ENCODE measurements at regions of chr9 and their contacts with region 1.

Region 1: GRCh38 chr9:34403554-34404380 is 27.1 kb upstream of the MYORG start:
- DNase-seq: peak; percentile 69
- ATAC-seq: peak; percentile 45
- H3K4me3 Mint-ChIP-seq: no peak overlapping the region
- H3K27ac Mint-ChIP-seq: no peak overlapping the region
- H3K4me1 Mint-ChIP-seq: no peaks in the 10 kb centered on the region
- H3K27me3 Mint-ChIP-seq: no peaks in the 10 kb centered on the region
- CTCF ChIP-seq: peak; percentile 100

Region 2: GRCh38 chr9:34376596-34377403 is 27.0 kb before region 1 on chr9 and contains the start of gene MYORG:
- CTCF ChIA-PET with region 1: interaction called, 30 read pairs
- POLR2A ChIA-PET with region 1: no interaction called
- intact Hi-C with region 1: no loop called
- DNase-seq: peak; percentile 99
- ATAC-seq: peak; percentile 86
- H3K4me3 Mint-ChIP-seq: peak within 1 kb of the TSS; percentile 87
- H3K27ac Mint-ChIP-seq: peak within 1 kb of the TSS; percentile 82
- H3K4me1 Mint-ChIP-seq: peaks cover 30% of the 10 kb centered on the region
- H3K27me3 Mint-ChIP-seq: no peaks in the 10 kb centered on the region
- CTCF ChIP-seq: no peak
- total RNA-seq, gene MYORG: 4.1 to 5.5 TPM

Region 3: GRCh38 chr9:34419716-34420504 is 16.1 kb after region 1 on chr9:
- CTCF ChIA-PET with region 1: interaction called, 30 read pairs
- POLR2A ChIA-PET with region 1: no interaction called
- intact Hi-C with region 1: no loop called
- DNase-seq: no peak
- ATAC-seq: no peak
- H3K4me3 Mint-ChIP-seq: no peak overlapping the region
- H3K27ac Mint-ChIP-seq: no peak overlapping the region
- H3K4me1 Mint-ChIP-seq: no peaks in the 10 kb centered on the region
- H3K27me3 Mint-ChIP-seq: no peaks in the 10 kb centered on the region
- CTCF ChIP-seq: no peak

Region 4: DNA sequence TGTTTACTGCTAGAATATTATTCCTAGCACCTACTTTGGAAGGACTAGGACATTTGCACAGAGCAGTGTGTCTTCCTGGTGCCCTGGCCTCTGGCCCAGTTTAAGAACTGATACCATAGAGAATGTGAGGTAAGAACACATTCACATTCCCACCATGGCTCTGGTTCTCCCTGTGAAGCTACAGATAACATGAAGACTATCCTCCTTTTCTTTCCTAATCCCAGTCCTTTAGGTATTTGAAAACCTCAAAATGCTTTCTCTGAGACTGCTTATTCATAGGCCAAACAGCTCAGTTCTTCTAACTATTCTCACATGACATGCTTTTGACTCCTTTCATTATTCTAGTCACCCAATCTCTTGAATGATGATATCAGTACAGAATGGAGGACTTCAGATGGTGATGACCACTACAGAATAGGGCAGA is 42.7 kb after region 1 on chr9:
- CTCF ChIA-PET with region 1: interaction called, 13 read pairs
- POLR2A ChIA-PET with region 1: no interaction called
- intact Hi-C with region 1: no loop called
- DNase-seq: no peak
- ATAC-seq: no peak
- H3K4me3 Mint-ChIP-seq: no peak overlapping the region
- H3K27ac Mint-ChIP-seq: no peak overlapping the region
- H3K4me1 Mint-ChIP-seq: peaks cover 5% of the 10 kb centered on the region
- H3K27me3 Mint-ChIP-seq: no peaks in the 10 kb centered on the region
- CTCF ChIP-seq: no peak

Region 5: DNA sequence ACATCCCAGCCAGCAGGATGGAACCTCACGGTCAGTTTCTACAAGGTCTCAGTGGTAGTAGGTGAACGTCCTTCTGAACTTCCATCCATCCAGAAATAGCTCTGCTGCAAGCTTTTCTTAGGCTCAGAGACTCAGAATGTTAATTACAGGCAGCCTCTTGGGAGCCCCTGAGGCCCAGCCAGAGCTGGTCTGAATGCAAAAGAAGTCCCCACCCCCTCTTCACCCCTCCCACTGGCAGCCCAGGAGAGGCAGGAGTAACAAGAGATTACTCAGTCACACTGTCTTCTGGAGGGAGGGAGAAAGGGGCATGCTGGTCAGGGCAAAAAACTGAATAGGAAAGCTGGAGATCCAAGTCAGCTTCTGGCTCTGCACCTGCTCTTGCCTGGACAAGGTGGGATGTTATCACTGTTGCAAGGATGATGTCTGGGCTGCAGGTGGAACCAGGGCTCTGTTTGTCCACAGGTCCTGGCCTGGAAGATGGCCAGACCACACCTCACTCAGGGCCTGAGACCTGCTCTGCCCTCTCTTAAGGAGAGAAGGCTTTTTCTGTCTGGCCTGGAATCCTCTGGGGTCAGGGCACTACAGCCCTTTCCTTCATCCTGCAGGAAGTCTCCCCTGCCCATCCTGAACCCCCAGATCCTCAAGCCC is 109.9 kb after region 1 on chr9:
- CTCF ChIA-PET with region 1: interaction called, 21 read pairs
- POLR2A ChIA-PET with region 1: no interaction called
- intact Hi-C with region 1: no loop called
- DNase-seq: no peak
- ATAC-seq: no peak
- H3K4me3 Mint-ChIP-seq: no peak overlapping the region
- H3K27ac Mint-ChIP-seq: no peak overlapping the region
- H3K4me1 Mint-ChIP-seq: no peaks in the 10 kb centered on the region
- H3K27me3 Mint-ChIP-seq: no peaks in the 10 kb centered on the region
- CTCF ChIP-seq: no peak

Region 6: GRCh38 chr9:34591248-34591916 is 187.6 kb after region 1 on chr9:
- CTCF ChIA-PET with region 1: interaction called, 19 read pairs
- POLR2A ChIA-PET with region 1: no interaction called
- intact Hi-C with region 1: no loop called
- DNase-seq: peak; percentile 84
- ATAC-seq: peak; percentile 85
- H3K4me3 Mint-ChIP-seq: peak overlapping the region; percentile 53
- H3K27ac Mint-ChIP-seq: no peak overlapping the region
- H3K4me1 Mint-ChIP-seq: peaks cover 23% of the 10 kb centered on the region
- H3K27me3 Mint-ChIP-seq: peaks cover 57% of the 10 kb centered on the region
- CTCF ChIP-seq: peak; percentile 97